Aorta (tissue), 5 donors: ENCODE measurements at regions of chr14 and their contacts with region 1.

Region 1: GRCh38 chr14:82009076-82009475 is 475.4 kb upstream of the SEL1L start:
- DNase-seq: no peak
- ATAC-seq: no peak
- H3K4me3 ChIP-seq: no peak overlapping the region
- H3K27ac ChIP-seq: no peak overlapping the region
- H3K4me1 ChIP-seq: no peaks in the 10 kb centered on the region
- H3K27me3 ChIP-seq: no peaks in the 10 kb centered on the region

Region 2: DNA sequence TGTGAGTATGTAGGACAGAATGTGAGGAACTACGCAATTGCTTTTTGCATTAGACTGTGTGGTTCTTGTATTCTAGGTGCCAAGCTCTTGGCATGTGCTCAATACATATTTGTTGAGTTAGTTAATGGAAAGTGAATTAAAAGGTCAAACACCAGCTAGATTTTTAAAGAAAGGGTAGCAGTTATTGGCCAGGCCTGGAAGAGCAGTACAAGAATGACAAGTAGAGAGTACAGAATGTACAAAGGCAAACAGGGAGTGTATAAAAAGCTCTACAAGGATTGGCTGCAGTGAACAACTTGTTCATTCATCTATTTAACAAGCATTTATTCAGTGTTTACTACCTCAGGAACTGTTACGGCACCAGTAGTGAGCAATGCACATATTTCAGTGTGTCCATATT is 378.6 kb after region 1 on chr14:
- intact Hi-C with region 1: loop called in 1 of 2 experiments (anchors 10 kb)
- DNase-seq: no peak
- ATAC-seq: peak; percentile 79
- H3K4me3 ChIP-seq: no peak overlapping the region
- H3K27ac ChIP-seq: no peak overlapping the region
- H3K4me1 ChIP-seq: peaks cover 0 to 2% of the 10 kb centered on the region in 2 donors
- H3K27me3 ChIP-seq: no peaks in the 10 kb centered on the region